Naive thymus-derived CD4-positive, alpha-beta T cell (primary cell): ENCODE measurements at regions of chr18 and their contacts with region 1.

Region 1: GRCh38 chr18:26121476-26121875 is 12.2 kb upstream of the PSMA8 start:
- DNase-seq: no peak
- ATAC-seq: no peak
- H3K4me3 ChIP-seq: no peak overlapping the region
- H3K4me3 Mint-ChIP-seq: no peak overlapping the region
- H3K27ac ChIP-seq: no peak overlapping the region
- H3K27ac Mint-ChIP-seq: peak overlapping the region in 1 of 9 donors; percentile 44
- H3K4me1 ChIP-seq: no peaks in the 10 kb centered on the region
- H3K4me1 Mint-ChIP-seq: peaks cover 0 to 9% (median 6%) of the 10 kb centered on the region in 7 donors
- H3K27me3 ChIP-seq: no peaks in the 10 kb centered on the region
- H3K27me3 Mint-ChIP-seq: peaks cover 3 to 11% (median 7%) of the 10 kb centered on the region in 5 donors

Region 2: DNA sequence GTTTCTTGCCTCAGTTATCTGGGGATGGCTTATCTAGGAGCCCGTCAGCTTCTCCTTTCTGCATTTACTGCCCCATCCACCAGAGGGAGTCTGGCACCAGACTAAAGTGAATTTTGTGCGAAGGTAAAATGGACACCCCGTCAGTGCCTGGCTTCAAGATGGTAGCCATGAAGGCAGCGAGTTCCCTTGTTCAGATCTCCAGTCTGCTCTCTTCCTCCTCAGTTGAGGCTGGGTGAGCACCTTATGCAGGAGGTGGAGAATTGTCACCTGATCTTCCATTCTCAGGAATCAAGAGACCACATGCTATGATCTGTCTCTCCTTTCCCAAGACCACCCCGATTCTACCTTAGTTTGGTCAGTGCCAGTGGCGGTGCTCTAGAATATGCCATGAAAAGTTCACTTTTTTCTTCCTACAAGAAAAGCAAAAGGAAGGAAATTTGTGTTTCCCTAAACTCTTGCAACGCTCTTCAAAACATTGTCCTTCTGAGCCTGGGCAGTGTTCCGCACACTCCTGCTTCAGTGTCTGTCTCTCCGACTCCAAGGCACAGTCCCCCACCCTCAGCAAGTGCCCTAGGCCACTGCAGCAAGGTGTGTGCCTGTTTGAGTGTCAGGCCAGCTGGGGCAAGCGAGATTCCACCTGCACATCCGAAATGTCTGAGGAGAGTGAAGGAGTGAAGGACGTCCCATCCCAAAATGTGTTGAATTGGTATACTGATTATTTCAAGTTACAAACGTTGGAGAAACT is 199.6 kb before region 1 on chr18:
- CTCF ChIA-PET with region 1: no interaction called
- POLR2A ChIA-PET with region 1: no interaction called
- intact Hi-C with region 1: loop called in 1 of 2 experiments (anchors 1 kb)
- DNase-seq: peak in 6 of 9 donors; percentile 10 to 44 (median 28)
- ATAC-seq: peak; percentile 69
- H3K4me3 ChIP-seq: no peak overlapping the region
- H3K4me3 Mint-ChIP-seq: no peak overlapping the region
- H3K27ac ChIP-seq: no peak overlapping the region
- H3K27ac Mint-ChIP-seq: peak overlapping the region in 1 of 9 donors; percentile 28
- H3K4me1 ChIP-seq: no peaks in the 10 kb centered on the region
- H3K4me1 Mint-ChIP-seq: peaks cover 0 to 3% (median 0%) of the 10 kb centered on the region in 7 donors
- H3K27me3 ChIP-seq: no peaks in the 10 kb centered on the region
- H3K27me3 Mint-ChIP-seq: peaks cover 0 to 9% (median 1%) of the 10 kb centered on the region in 5 donors

Region 3: DNA sequence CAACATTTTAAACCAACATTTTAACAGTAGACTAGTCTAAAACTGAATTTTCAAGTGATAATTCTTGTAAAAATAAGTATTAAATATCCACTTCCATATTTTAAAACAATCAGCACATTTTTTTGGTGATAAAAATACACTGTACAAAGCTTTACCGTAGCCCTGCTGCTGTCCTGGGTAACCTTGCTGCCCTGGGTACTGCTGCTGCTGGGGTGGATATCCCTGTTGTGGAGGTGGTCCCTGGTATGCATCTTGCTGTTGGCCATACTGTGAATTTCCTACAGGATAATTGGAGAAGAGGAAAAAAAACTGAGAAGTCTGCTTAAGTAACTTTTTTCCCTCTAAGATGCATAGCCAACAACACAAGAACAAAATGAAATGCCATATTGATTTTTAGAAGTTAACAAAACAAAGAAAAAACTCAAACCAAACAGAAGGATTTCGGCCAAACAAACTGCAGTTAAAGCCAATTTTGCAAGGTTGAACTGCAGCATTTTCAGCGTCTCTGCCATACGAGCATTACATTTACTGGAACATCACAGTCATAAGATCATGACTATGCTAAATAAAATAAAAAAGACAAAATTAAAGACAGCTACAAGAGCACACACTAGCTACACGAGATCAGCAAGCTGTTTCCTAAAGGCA is 86.5 kb before region 1 on chr18:
- CTCF ChIA-PET with region 1: no interaction called
- POLR2A ChIA-PET with region 1: no interaction called
- intact Hi-C with region 1: no loop called
- DNase-seq: no peak
- ATAC-seq: no peak
- H3K4me3 ChIP-seq: no peak overlapping the region
- H3K4me3 Mint-ChIP-seq: no peak overlapping the region
- H3K27ac ChIP-seq: no peak overlapping the region
- H3K27ac Mint-ChIP-seq: peak overlapping the region in 1 of 9 donors; percentile 3
- H3K4me1 ChIP-seq: no peaks in the 10 kb centered on the region
- H3K4me1 Mint-ChIP-seq: peaks cover 2 to 8% (median 6%) of the 10 kb centered on the region in 7 donors
- H3K27me3 ChIP-seq: no peaks in the 10 kb centered on the region
- H3K27me3 Mint-ChIP-seq: no peaks in the 10 kb centered on the region

Region 4: DNA sequence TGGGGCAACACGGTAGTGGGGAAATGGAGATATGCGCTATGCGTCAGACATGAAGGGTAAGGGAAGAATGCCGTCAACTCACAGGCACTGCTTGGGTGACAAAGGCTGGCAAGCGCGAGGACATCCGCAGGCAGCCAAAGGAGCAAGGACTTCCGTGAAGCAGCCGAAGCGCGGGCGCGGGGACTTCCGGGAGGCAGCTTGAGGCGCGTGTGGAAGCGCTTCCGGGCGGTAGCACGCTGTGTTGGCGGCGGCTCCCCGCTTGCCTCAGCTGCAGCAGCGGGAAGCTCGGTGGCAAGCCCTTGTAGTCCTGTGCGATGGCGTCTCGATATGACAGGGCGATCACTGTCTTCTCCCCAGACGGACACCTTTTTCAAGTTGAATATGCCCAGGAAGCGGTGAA is 12.2 kb after region 1 on chr18 and contains the start of gene PSMA8:
- CTCF ChIA-PET with region 1: interaction called, 3 read pairs
- POLR2A ChIA-PET with region 1: no interaction called
- intact Hi-C with region 1: loop called in 1 of 2 experiments (anchors 2 kb)
- DNase-seq: peak; percentile 27 to 68 (median 52)
- ATAC-seq: peak; percentile 85
- H3K4me3 ChIP-seq: peak within 1 kb of the TSS; percentile 38
- H3K4me3 Mint-ChIP-seq: peak within 1 kb of the TSS; percentile 56 to 88 (median 81)
- H3K27ac ChIP-seq: peak within 1 kb of the TSS; percentile 75
- H3K27ac Mint-ChIP-seq: peak within 1 kb of the TSS; percentile 72 to 94 (median 85)
- H3K4me1 ChIP-seq: no peaks in the 10 kb centered on the region
- H3K4me1 Mint-ChIP-seq: peaks cover 0 to 13% (median 5%) of the 10 kb centered on the region in 7 donors
- H3K27me3 ChIP-seq: no peaks in the 10 kb centered on the region
- H3K27me3 Mint-ChIP-seq: no peaks in the 10 kb centered on the region
- total RNA-seq, gene PSMA8: 0.19 to 0.89 (median 0.59) TPM